Endothelial cell of umbilical vein (primary cell): ENCODE measurements at regions of chr16 and their contacts with region 1.

Region 1: GRCh38 chr16:84511180-84511824 is 6.8 kb upstream of the MEAK7 start:
- DNase-seq: peak; percentile 87
- H3K4me3 ChIP-seq: no peak overlapping the region
- H3K27ac ChIP-seq: no peak overlapping the region
- H3K4me1 ChIP-seq: peaks cover 3% of the 10 kb centered on the region
- H3K27me3 ChIP-seq: no peaks in the 10 kb centered on the region
- CTCF ChIP-seq: peak; percentile 86 to 92
- POLR2A ChIP-seq: no peak

Region 2: DNA sequence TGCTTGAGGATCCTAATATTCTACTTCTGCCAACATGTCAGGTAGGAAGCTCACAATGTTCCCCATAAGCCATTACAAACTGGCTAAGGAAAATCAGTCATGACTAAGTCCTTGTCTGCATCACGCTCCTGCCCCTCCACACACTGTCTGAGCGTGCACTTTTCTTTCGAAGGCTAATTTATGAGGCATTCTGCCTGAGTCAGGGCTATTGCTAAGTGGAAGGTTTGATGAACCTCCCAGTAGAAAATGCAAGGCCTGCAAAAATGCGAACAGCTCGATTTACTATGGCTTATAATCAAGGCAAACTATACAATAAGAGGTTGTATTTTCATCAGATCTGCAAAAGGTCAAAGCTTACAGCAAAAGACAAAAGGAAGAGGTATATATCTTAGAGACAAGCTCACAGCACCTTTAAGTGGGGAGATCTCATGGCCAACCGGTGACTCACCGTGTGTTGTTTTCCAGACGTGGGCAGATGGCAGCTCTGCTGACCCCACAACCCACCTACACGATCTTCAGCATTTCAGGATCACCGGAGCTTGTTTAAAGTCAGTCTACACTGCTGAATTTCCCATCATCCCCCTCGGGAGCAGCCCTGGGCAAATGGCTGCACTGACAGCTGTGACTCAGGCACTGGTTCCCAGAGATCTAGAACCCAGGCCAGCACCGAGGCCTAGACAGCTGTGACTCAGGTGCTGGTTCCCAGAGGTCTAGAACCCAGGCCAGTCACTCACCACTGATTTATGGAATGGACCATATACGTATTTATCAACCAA is 32.9 kb before region 1 on chr16:
- CTCF ChIA-PET with region 1: no interaction called
- POLR2A ChIA-PET with region 1: no interaction called
- dilution Hi-C with region 1: no loop called
- intact Hi-C with region 1: no loop called
- DNase-seq: no peak
- H3K4me3 ChIP-seq: no peak overlapping the region
- H3K27ac ChIP-seq: no peak overlapping the region
- H3K4me1 ChIP-seq: no peaks in the 10 kb centered on the region
- H3K27me3 ChIP-seq: no peaks in the 10 kb centered on the region
- CTCF ChIP-seq: no peak
- POLR2A ChIP-seq: no peak

Region 3: DNA sequence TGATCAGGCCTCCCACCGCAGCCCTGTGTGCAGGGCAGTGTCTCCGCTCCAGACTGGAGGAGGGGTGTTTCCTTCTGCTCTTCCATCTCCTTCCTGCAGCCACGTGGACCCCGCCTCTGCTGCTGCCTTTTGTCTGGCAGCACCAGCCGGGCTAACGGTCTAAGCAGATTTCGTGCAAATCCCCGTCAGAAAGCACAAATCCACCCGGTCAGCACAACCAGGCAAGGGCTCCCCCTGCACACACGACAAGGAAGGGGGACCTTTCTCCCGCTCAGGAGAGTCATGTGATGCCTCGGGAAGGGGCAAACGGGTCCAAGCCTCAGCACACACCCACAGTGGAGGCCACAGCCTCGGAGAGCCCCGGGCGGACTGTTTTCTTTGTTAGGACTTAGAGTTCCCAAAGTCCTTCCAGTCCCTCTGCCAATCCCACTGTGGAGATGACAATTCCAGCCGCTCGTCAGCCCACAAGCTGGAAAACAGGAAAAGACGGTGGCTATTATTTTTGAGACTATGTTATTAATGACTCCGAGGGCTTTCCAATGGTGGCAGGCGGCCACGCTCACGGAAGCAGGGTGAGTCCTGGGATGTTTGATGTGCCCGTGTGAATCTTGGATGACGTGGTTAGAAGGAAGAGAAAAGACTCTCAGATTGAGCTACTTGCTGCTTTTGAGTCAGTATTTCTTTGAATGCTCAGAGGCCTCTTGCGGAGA is 15.6 kb after region 1 on chr16:
- CTCF ChIA-PET with region 1: interaction called, 73 read pairs
- POLR2A ChIA-PET with region 1: no interaction called
- dilution Hi-C with region 1: no loop called
- intact Hi-C with region 1: loop called (anchors 1 kb)
- DNase-seq: peak; percentile 76
- H3K4me3 ChIP-seq: no peak overlapping the region
- H3K27ac ChIP-seq: peak overlapping the region; percentile 68
- H3K4me1 ChIP-seq: peaks cover 23% of the 10 kb centered on the region
- H3K27me3 ChIP-seq: no peaks in the 10 kb centered on the region
- CTCF ChIP-seq: no peak
- POLR2A ChIP-seq: peak; percentile 54

Region 4: DNA sequence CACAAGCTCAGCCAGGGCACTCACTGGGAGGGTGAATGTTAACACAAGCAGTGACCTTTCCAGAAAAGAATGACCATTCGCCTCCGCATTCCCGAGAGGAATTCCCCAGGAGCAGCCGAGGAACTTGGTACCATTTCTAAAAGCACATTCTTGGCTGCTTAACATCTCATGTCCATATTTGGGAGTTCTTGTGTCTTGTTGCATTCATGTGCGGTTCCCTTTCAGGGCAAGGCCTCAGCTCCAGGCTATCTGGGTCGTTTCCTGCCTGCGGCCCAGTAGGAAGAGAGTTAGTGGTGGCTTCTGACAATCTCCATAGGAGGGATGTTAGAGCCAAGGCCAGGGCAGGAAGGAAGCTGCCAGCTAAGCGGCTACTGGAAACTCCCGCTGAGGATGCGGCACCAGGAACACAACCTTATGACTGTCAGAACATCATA is 21.0 kb after region 1 on chr16:
- CTCF ChIA-PET with region 1: interaction called, 73 read pairs
- POLR2A ChIA-PET with region 1: no interaction called
- dilution Hi-C with region 1: no loop called
- intact Hi-C with region 1: loop called (anchors 1 kb)
- DNase-seq: peak; percentile 93
- H3K4me3 ChIP-seq: no peak overlapping the region
- H3K27ac ChIP-seq: peak overlapping the region; percentile 78
- H3K4me1 ChIP-seq: peaks cover 30% of the 10 kb centered on the region
- H3K27me3 ChIP-seq: no peaks in the 10 kb centered on the region
- CTCF ChIP-seq: no peak
- POLR2A ChIP-seq: peak; percentile 20

Region 5: GRCh38 chr16:84562174-84562815 is 51.0 kb after region 1 on chr16:
- CTCF ChIA-PET with region 1: interaction called, 19 read pairs
- POLR2A ChIA-PET with region 1: no interaction called
- dilution Hi-C with region 1: no loop called
- intact Hi-C with region 1: no loop called
- DNase-seq: no peak
- H3K4me3 ChIP-seq: no peak overlapping the region
- H3K27ac ChIP-seq: no peak overlapping the region
- H3K4me1 ChIP-seq: no peaks in the 10 kb centered on the region
- H3K27me3 ChIP-seq: no peaks in the 10 kb centered on the region
- CTCF ChIP-seq: no peak
- POLR2A ChIP-seq: no peak

Region 6: DNA sequence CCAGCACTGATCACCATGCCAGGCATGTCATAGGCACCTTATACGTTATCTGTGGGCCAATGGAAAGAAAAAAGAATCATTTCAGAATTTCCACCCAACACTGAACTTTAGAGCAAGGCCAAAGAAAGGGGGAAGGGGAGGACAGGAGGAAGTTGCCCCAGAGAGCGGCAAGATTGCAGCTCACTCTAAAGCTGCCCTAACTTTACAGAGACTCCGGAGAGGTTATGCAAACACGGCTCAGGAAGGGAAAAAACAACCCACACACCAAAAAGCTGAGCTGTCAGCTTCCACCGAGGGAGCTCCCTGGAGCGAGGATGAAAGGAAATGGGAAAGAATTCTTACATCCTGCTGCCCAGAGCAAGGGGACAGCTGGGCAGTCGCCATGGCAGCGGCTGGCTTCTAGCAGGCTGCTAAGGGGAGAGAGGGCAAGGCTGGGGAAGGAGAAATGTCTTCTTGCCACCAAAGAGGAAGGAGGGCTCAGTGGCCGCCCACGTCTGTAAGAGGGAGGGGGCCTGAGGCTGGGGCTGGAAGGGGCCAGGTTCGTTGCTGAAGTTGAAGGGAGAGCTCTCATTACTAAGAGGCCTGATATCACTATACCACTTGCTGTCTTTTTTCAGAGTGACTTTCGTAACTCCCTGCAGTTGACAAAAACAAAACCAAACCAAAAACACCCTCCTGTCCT is 88.4 kb after region 1 on chr16:
- CTCF ChIA-PET with region 1: interaction called, 23 read pairs
- POLR2A ChIA-PET with region 1: no interaction called
- dilution Hi-C with region 1: loop called (anchors 25 kb)
- intact Hi-C with region 1: no loop called
- DNase-seq: peak; percentile 91
- H3K4me3 ChIP-seq: peak overlapping the region in 1 of 3 experiments; percentile 43
- H3K27ac ChIP-seq: peak overlapping the region; percentile 82
- H3K4me1 ChIP-seq: peaks cover 62% of the 10 kb centered on the region
- H3K27me3 ChIP-seq: no peaks in the 10 kb centered on the region
- CTCF ChIP-seq: no peak
- POLR2A ChIP-seq: peak; percentile 51

Region 7: DNA sequence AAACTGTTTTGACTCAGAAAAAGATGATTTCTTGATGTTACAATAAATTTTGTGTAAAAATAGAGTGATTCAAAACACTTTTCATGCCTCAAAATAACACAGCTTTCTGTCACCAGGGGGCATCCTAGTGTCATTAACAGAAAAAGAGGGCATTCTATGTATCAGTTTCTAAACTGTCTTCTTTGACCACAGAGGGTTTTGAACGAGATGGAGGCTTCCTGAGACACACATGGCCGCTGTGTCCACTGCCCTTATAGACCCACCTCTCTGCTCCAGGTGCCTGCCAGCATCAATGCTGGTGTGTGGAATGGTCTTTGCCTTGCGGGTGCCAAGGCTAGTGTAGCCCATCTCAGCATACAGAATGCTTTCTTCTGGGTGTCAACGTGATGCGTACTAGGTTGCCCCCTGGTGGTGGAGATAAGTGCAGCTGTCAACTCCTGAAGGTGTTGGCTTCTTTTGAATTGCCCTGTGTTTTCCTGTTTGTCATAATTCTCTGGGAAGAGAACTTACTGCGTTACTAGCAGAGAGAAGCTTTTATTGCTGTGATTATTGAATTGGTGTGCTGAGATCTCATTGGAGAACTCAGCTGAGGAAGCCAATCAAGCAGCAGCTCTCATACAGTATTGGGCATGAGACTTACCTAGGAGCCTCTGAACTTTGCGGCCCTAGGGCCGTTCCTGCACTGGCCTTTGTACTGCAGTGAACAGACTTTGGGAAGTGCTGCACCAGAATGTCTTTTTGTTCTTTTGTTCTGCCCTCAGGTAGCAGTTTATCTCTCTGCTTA is 227.1 kb after region 1 on chr16:
- CTCF ChIA-PET with region 1: interaction called, 8 read pairs
- POLR2A ChIA-PET with region 1: no interaction called
- dilution Hi-C with region 1: no loop called
- intact Hi-C with region 1: loop called (anchors 1 kb)
- DNase-seq: peak; percentile 92
- H3K4me3 ChIP-seq: no peak overlapping the region
- H3K27ac ChIP-seq: no peak overlapping the region
- H3K4me1 ChIP-seq: peaks cover 28% of the 10 kb centered on the region
- H3K27me3 ChIP-seq: no peaks in the 10 kb centered on the region
- CTCF ChIP-seq: peak; percentile 88 to 92
- POLR2A ChIP-seq: no peak